IMR-90 (cell line): ENCODE measurements at regions of chr12 and their contacts with region 1.

Region 1: GRCh38 chr12:131991816-131992430 is 42.2 kb downstream of the EP400 start:
- DNase-seq: no peak
- ATAC-seq: no peak
- H3K4me3 ChIP-seq: no peak overlapping the region
- H3K27ac ChIP-seq: no peak overlapping the region
- H3K4me1 ChIP-seq: no peaks in the 10 kb centered on the region
- H3K27me3 ChIP-seq: no peaks in the 10 kb centered on the region
- CTCF ChIP-seq: no peak
- POLR2A ChIP-seq: no peak
- RAD21 ChIP-seq: no peak

Region 2: DNA sequence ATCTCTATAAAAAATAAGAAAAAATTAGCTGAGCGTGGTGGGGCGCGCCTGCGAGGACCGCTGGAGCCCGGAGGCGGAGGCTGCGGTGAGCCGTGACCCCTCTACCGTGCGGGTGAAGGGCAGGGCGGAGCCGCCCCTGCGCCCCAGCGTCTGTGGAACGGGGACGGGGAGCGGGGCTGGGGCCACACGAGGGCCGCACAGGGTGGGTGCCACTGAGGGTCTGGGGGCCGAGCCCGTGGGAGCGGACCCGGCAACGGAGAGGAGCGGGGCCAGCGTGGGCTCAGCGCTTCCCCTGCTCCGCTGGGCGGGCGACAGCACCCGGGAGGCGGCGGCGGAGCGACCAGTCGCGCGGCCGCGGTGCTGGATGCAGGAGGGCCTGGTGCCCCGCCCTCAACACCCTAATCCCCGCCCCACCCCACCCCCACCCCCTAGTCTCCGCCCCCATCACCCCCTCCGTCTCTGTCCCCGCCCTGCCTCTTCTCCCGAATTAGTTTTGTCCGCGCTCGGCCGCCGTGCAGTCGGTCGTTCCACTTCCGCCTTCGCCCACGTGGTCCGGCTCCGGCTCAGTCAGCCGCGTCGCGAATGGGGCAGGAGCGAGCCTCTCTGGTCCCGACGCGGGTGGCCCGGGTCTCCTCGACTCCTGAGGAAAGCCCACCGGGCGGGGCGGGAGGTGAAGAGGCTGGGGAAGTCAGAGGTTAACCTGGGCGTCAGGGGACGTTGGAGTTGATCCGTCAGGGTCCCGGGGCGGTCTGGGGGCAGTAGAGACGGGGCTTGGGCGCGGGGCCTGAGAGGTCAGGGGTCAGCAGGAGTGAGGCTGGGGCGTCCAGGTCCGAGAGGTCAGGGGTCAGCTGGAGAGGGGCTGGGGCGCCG is 63.0 kb before region 1 on chr12 and contains the start of gene PUS1:
- CTCF ChIA-PET with region 1: no interaction called
- POLR2A ChIA-PET with region 1: no interaction called
- dilution Hi-C with region 1: no loop called
- in situ Hi-C with region 1: no loop called
- intact Hi-C with region 1: no loop called
- DNase-seq: peak; percentile 91
- ATAC-seq: peak; percentile 96
- H3K4me3 ChIP-seq: peak within 1 kb of the TSS; percentile 97
- H3K27ac ChIP-seq: peak within 1 kb of the TSS; percentile 83
- H3K4me1 ChIP-seq: peaks cover 2% of the 10 kb centered on the region
- H3K27me3 ChIP-seq: no peaks in the 10 kb centered on the region
- CTCF ChIP-seq: no peak
- POLR2A ChIP-seq: peak; percentile 85
- RAD21 ChIP-seq: no peak
- total RNA-seq, gene PUS1: 11.4 and 14.0 TPM in 2 replicates

Region 3: GRCh38 chr12:131980260-131980659 is 11.7 kb before region 1 on chr12:
- CTCF ChIA-PET with region 1: interaction called, 10 read pairs
- POLR2A ChIA-PET with region 1: no interaction called
- dilution Hi-C with region 1: no loop called
- in situ Hi-C with region 1: no loop called
- intact Hi-C with region 1: no loop called
- DNase-seq: peak; percentile 28
- ATAC-seq: peak; percentile 60; the same call in 1 of the 2 replicates
- H3K4me3 ChIP-seq: no peak overlapping the region
- H3K27ac ChIP-seq: no peak overlapping the region
- H3K4me1 ChIP-seq: peaks cover 4% of the 10 kb centered on the region
- H3K27me3 ChIP-seq: no peaks in the 10 kb centered on the region
- CTCF ChIP-seq: peak; percentile 21; the same call in 1 of the 2 replicates
- POLR2A ChIP-seq: no peak
- RAD21 ChIP-seq: peak; percentile 35; the same call in 1 of the 2 replicates

Region 4: DNA sequence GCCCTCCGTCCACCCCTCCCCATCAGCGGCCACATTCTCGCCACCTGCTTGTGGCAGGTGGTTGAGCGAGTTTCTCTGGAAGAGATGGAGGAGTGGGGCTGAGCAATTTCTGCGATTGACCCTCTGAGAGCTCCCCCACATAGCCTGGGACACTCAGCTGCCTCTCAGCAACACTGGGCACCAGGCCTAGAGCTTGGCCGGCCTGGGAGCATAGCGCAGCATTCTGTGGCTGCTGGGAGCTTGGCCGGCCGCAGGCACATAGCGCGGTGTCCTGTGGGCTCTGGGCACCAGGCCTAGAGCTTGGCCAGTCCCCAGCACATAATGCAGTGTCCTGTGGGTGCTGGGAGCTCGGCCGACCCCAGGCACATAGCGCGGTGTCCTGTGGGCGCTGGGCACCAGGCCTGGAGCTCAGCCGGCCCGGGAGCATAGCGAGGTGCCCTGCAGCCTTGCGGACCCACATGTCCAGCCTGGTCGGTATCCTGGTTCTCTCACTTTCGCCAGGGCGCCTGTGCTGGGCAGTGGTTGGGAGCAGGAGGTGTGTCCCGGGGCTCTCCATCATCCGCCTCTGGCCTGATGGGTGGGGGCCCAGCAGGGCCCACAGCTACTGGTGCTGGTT is 574.7 kb after region 1 on chr12:
- CTCF ChIA-PET with region 1: no interaction called
- POLR2A ChIA-PET with region 1: no interaction called
- dilution Hi-C with region 1: no loop called
- in situ Hi-C with region 1: no loop called
- intact Hi-C with region 1: no loop called
- DNase-seq: no peak
- ATAC-seq: no peak
- H3K4me3 ChIP-seq: no peak overlapping the region
- H3K27ac ChIP-seq: no peak overlapping the region
- H3K4me1 ChIP-seq: no peaks in the 10 kb centered on the region
- H3K27me3 ChIP-seq: no peaks in the 10 kb centered on the region
- CTCF ChIP-seq: no peak
- POLR2A ChIP-seq: no peak
- RAD21 ChIP-seq: no peak